ENCODE measurements at regions of chr6 and their contacts with region 1.

Region 1: GRCh38 chr6:31139599-31139998 is 733 bp upstream of the PSORS1C2 start:
- DNase-seq: no peak
- ATAC-seq: no peak
- H3K4me3 ChIP-seq: no peak overlapping the region
- H3K27ac ChIP-seq: no peak overlapping the region
- H3K4me1 ChIP-seq: peaks cover 0 to 5% of the 10 kb centered on the region in 2 donors
- H3K27me3 ChIP-seq: no peaks in the 10 kb centered on the region
- CTCF ChIP-seq: no peak

Region 2: GRCh38 chr6:30590994-30591393 is 548.6 kb before region 1 on chr6:
- intact Hi-C with region 1: no loop called
- DNase-seq: peak in 2 of 4 donors; percentile 61 to 75
- ATAC-seq: peak; percentile 88
- H3K4me3 ChIP-seq: no peak overlapping the region
- H3K27ac ChIP-seq: peak overlapping the region; percentile 50 to 53
- H3K4me1 ChIP-seq: peaks cover 12 to 13% of the 10 kb centered on the region in 2 donors
- H3K27me3 ChIP-seq: no peaks in the 10 kb centered on the region
- CTCF ChIP-seq: no peak

Region 3: DNA sequence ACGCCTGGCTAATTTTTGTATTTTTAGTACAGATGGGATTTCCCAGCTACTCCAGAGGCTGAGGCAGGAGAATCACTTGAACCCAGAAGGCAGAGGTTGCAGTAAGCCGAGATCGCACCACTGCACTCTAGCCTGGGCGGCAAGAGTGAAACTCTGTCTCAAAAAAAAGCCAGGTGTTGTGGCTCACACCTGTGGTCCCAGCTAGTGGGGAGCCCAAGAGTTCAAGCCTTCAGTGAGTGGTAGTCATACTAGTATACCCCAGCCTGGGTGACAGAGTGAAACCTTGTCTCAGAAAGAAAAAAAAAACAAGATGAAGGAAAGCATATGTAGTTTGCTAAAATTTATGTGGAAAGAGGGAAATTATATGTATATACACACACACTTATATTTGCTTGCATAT is 50.9 kb after region 1 on chr6:
- intact Hi-C with region 1: loop called (anchors 2 to 10 kb)
- DNase-seq: no peak
- ATAC-seq: no peak
- H3K4me3 ChIP-seq: no peak overlapping the region
- H3K27ac ChIP-seq: no peak overlapping the region
- H3K4me1 ChIP-seq: peaks cover 3 to 15% of the 10 kb centered on the region in 2 donors
- H3K27me3 ChIP-seq: no peaks in the 10 kb centered on the region
- CTCF ChIP-seq: no peak

Region 4: GRCh38 chr6:31197559-31198305 is 58.1 kb after region 1 on chr6:
- intact Hi-C with region 1: loop called in 1 of 2 experiments (anchors 10 kb)
- DNase-seq: peak; percentile 82 to 96 (median 91)
- ATAC-seq: peak; percentile 89
- H3K4me3 ChIP-seq: peak overlapping the region; percentile 51 to 68
- H3K27ac ChIP-seq: peak overlapping the region; percentile 98 to 100
- H3K4me1 ChIP-seq: peaks cover 0 to 76% of the 10 kb centered on the region in 2 donors
- H3K27me3 ChIP-seq: no peaks in the 10 kb centered on the region
- CTCF ChIP-seq: no peak

Region 5: DNA sequence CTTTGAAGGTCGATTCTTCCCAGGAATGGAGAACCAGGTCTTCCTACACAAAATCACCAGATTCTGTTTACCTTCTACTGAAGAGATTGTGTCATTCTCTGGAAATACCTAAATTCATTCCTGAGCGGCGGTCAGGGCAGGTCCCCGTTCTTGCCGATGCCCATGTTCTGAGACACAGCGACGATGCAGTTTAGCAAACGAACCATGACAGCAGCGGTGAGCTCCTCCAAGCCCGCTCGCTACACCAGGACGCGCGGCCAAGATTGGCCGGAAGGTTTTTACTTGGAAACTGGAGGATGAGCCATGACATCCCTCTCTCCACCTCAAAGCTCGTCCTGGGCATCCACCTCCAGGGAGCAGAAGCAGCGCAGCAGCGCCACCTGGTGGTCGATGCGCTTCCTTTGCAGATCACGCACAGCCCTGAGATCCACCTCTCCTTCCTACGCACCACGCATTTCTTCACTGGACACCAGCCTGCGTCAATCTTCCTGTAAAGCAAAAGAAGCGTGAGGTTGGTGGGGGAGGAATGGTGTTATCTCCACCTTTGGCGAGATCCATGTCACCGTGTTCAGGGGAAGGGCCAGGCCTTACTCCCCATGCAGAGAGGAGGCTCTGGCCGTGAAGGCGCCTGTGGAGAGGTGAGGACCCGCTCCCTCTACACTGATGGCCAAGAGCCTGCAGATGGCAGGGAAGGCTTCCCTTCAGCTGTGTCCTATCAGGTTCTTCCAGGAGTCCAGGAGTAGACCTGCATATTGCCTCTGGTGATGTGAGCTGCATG is 227.3 kb after region 1 on chr6:
- intact Hi-C with region 1: loop called in 1 of 2 experiments (anchors 5 kb)
- DNase-seq: peak; percentile 82 to 97 (median 92)
- ATAC-seq: peak; percentile 100
- H3K4me3 ChIP-seq: peak overlapping the region in 1 of 2 donors; percentile 26
- H3K27ac ChIP-seq: no peak overlapping the region
- H3K4me1 ChIP-seq: peaks cover 0 to 13% of the 10 kb centered on the region in 2 donors
- H3K27me3 ChIP-seq: peaks cover 0 to 16% of the 10 kb centered on the region in 2 donors
- CTCF ChIP-seq: peak; percentile 83 to 96

Measured in left lung (tissue), 14 donors.